PC-9 (cell line): ENCODE measurements at regions of chr12 and their contacts with region 1.

Region 1: GRCh38 chr12:29208936-29209701 is 60.0 kb downstream of the FAR2 start:
- DNase-seq: no peak
- H3K4me3 ChIP-seq: no peak overlapping the region
- H3K27ac ChIP-seq: no peak overlapping the region
- H3K4me1 ChIP-seq: no peaks in the 10 kb centered on the region
- H3K27me3 ChIP-seq: no peaks in the 10 kb centered on the region
- CTCF ChIP-seq: no peak

Region 2: GRCh38 chr12:29041621-29042020 is 167.5 kb before region 1 on chr12:
- CTCF ChIA-PET with region 1: interaction called, 10 read pairs
- POLR2A ChIA-PET with region 1: no interaction called
- intact Hi-C with region 1: no loop called
- DNase-seq: no peak
- H3K4me3 ChIP-seq: no peak overlapping the region
- H3K27ac ChIP-seq: no peak overlapping the region
- H3K4me1 ChIP-seq: peaks cover 8% of the 10 kb centered on the region
- H3K27me3 ChIP-seq: no peaks in the 10 kb centered on the region
- CTCF ChIP-seq: no peak